Right lobe of liver (tissue), 6 donors: ENCODE measurements at regions of chr13 and their contacts with region 1.

Region 1: DNA sequence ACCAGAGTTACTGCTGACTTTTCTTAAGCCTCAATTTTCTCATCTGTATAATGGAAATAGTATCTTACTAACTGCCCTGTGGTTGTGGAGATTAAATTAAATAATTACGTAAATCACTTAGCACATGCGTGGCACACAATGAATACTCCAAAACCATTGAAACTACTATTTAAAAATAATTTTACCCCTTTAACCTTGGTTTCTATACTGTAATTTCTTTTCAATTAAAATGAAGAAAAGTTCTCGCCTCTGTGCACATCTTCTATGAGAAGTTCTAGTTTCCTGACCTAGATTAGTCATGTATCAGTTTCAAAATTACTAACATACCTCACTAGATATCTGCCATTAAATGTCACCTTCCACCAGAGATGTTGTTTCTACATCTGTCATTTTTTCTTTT is 5.7 kb downstream of the SLITRK1 start:
- DNase-seq: no peak
- ATAC-seq: no peak
- H3K4me3 ChIP-seq: no peak overlapping the region
- H3K27ac ChIP-seq: no peak overlapping the region
- H3K4me1 ChIP-seq: no peaks in the 10 kb centered on the region
- H3K27me3 ChIP-seq: no peaks in the 10 kb centered on the region
- CTCF ChIP-seq: no peak
- POLR2A ChIP-seq: no peak

Region 2: GRCh38 chr13:83546476-83546875 is 330.1 kb before region 1 on chr13:
- intact Hi-C with region 1: loop called in 1 of 2 experiments (anchors 5 kb)
- DNase-seq: no peak
- ATAC-seq: no peak
- H3K4me3 ChIP-seq: no peak overlapping the region
- H3K27ac ChIP-seq: no peak overlapping the region
- H3K4me1 ChIP-seq: no peaks in the 10 kb centered on the region
- H3K27me3 ChIP-seq: no peaks in the 10 kb centered on the region
- CTCF ChIP-seq: no peak
- POLR2A ChIP-seq: no peak

Region 3: GRCh38 chr13:83601539-83601938 is 275.0 kb before region 1 on chr13:
- intact Hi-C with region 1: no loop called
- DNase-seq: no peak
- ATAC-seq: no peak
- H3K4me3 ChIP-seq: no peak overlapping the region
- H3K27ac ChIP-seq: no peak overlapping the region
- H3K4me1 ChIP-seq: no peaks in the 10 kb centered on the region
- H3K27me3 ChIP-seq: no peaks in the 10 kb centered on the region
- CTCF ChIP-seq: no peak
- POLR2A ChIP-seq: no peak

Region 4: DNA sequence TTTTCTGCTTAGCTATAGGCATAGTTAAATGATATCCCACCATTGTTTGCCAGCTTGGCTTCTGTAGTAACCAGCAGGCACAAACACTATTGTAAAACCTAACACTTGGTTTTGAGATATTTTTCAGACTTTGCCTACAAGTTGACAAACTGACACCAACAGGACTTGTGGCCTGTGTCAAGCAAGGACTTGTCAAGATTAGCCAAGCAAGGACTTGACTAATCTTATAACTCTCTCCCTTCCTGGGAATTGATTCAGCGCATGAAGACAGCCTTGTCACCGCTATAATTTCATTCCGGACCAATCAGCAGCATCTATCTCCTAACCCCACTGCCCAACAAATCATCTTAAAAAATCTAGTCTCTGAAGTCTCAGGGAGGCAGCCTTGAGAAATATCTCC is 78.5 kb after region 1 on chr13:
- intact Hi-C with region 1: no loop called
- DNase-seq: no peak
- ATAC-seq: no peak
- H3K4me3 ChIP-seq: no peak overlapping the region
- H3K27ac ChIP-seq: no peak overlapping the region
- H3K4me1 ChIP-seq: no peaks in the 10 kb centered on the region
- H3K27me3 ChIP-seq: no peaks in the 10 kb centered on the region
- CTCF ChIP-seq: no peak
- POLR2A ChIP-seq: no peak